ENCODE measurements at regions of chr4 and their contacts with region 1.

Region 1: DNA sequence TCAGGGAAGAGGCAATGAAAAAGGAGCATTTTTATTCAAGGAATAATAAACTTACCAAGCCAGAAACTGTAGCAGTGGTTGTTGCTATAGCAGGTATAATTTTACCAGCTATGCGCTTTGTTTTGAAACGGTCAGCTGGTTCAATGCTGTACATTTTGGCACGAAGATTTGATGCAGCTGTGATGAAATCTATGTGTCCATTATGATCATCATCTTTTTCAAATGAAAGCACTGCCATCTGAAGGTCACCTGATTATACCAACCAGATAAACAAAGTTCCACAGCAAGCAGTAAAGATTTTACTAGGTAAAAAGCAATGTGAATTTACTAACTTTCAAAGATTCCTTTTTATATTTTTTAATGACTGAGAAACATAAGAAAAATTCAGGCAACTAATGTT is 66.4 kb downstream of the STAP1 start:
- DNase-seq: no peak
- ATAC-seq: no peak
- H3K4me3 ChIP-seq: no peak overlapping the region
- H3K27ac ChIP-seq: no peak overlapping the region
- H3K4me1 ChIP-seq: no peaks in the 10 kb centered on the region
- H3K27me3 ChIP-seq: no peaks in the 10 kb centered on the region
- CTCF ChIP-seq: no peak

Region 2: GRCh38 chr4:66959207-66959606 is 665.7 kb before region 1 on chr4:
- intact Hi-C with region 1: no loop called
- DNase-seq: no peak
- ATAC-seq: peak in 1 of 4 donors; percentile 23
- H3K4me3 ChIP-seq: no peak overlapping the region
- H3K27ac ChIP-seq: no peak overlapping the region
- H3K4me1 ChIP-seq: no peaks in the 10 kb centered on the region
- H3K27me3 ChIP-seq: no peaks in the 10 kb centered on the region
- CTCF ChIP-seq: no peak

Region 3: GRCh38 chr4:67499799-67500198 is 125.1 kb before region 1 on chr4:
- intact Hi-C with region 1: loop called in 1 of 2 experiments (anchors 10 kb)
- DNase-seq: no peak
- ATAC-seq: no peak
- H3K4me3 ChIP-seq: no peak overlapping the region
- H3K27ac ChIP-seq: no peak overlapping the region
- H3K4me1 ChIP-seq: no peaks in the 10 kb centered on the region
- H3K27me3 ChIP-seq: no peaks in the 10 kb centered on the region
- CTCF ChIP-seq: no peak

Region 4: GRCh38 chr4:67668315-67668714 is 43.4 kb after region 1 on chr4:
- intact Hi-C with region 1: loop called (anchors 5 to 10 kb)
- DNase-seq: no peak
- ATAC-seq: no peak
- H3K4me3 ChIP-seq: no peak overlapping the region
- H3K27ac ChIP-seq: no peak overlapping the region
- H3K4me1 ChIP-seq: no peaks in the 10 kb centered on the region
- H3K27me3 ChIP-seq: no peaks in the 10 kb centered on the region
- CTCF ChIP-seq: no peak

Region 5: GRCh38 chr4:67674096-67674495 is 49.2 kb after region 1 on chr4:
- intact Hi-C with region 1: loop called (anchors 5 to 10 kb)
- DNase-seq: no peak
- ATAC-seq: no peak
- H3K4me3 ChIP-seq: no peak overlapping the region
- H3K27ac ChIP-seq: no peak overlapping the region
- H3K4me1 ChIP-seq: no peaks in the 10 kb centered on the region
- H3K27me3 ChIP-seq: no peaks in the 10 kb centered on the region
- CTCF ChIP-seq: no peak